Activated CD4-positive, alpha-beta T cell treated with anti-CD3 and anti-CD28 coated beads for 36 hours (primary cell): ENCODE measurements at regions of chr5 and their contacts with region 1.

Region 1: DNA sequence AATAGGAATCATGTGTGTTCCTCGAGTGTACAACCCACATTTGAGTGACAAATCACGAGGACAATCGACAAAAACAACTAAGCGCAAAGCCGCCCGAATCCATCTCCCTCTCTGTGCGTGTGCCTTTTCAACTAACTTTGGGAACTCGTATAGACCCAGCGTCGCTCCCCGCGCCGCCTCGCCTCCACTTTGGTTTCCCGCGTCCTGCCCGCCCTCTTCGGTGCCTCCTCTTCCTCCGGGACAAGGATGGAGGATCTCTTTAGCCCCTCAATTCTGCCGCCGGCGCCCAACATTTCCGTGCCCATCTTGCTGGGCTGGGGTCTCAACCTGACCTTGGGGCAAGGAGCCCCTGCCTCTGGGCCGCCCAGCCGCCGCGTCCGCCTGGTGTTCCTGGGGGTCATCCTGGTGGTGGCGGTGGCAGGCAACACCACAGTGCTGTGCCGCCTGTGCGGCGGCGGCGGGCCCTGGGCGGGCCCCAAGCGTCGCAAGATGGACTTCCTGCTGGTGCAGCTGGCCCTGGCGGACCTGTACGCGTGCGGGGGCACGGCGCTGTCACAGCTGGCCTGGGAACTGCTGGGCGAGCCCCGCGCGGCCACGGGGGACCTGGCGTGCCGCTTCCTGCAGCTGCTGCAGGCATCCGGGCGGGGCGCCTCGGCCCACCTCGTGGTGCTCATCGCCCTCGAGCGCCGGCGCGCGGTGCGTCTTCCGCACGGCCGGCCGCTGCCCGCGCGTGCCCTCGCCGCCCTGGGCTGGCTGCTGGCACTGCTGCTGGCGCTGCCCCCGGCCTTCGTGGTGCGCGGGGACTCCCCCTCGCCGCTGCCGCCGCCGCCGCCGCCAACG is at the start of gene GPR150:
- DNase-seq: peak; percentile 81
- ATAC-seq: peak; percentile 65
- H3K4me3 Mint-ChIP-seq: peak within 1 kb of the TSS; percentile 75
- H3K27ac Mint-ChIP-seq: peak within 1 kb of the TSS; percentile 73
- H3K4me1 Mint-ChIP-seq: peaks cover 47% of the 10 kb centered on the region
- H3K27me3 Mint-ChIP-seq: no peaks in the 10 kb centered on the region
- total RNA-seq, gene GPR150: 0.37 to 0.46 TPM

Region 2: GRCh38 chr5:95565280-95565920 is 54.9 kb before region 1 on chr5:
- CTCF ChIA-PET with region 1: no interaction called
- POLR2A ChIA-PET with region 1: no interaction called
- intact Hi-C with region 1: no loop called
- DNase-seq: no peak
- ATAC-seq: no peak
- H3K4me3 Mint-ChIP-seq: no peak overlapping the region
- H3K27ac Mint-ChIP-seq: no peak overlapping the region
- H3K4me1 Mint-ChIP-seq: peaks cover 5% of the 10 kb centered on the region
- H3K27me3 Mint-ChIP-seq: no peaks in the 10 kb centered on the region

Region 3: GRCh38 chr5:95591490-95591901 is 28.8 kb before region 1 on chr5:
- CTCF ChIA-PET with region 1: no interaction called
- POLR2A ChIA-PET with region 1: no interaction called
- intact Hi-C with region 1: loop called (anchors 1 kb)
- DNase-seq: no peak
- ATAC-seq: peak; percentile 95
- H3K4me3 Mint-ChIP-seq: no peak overlapping the region
- H3K27ac Mint-ChIP-seq: peak overlapping the region; percentile 62
- H3K4me1 Mint-ChIP-seq: peaks cover 30% of the 10 kb centered on the region
- H3K27me3 Mint-ChIP-seq: no peaks in the 10 kb centered on the region

Region 4: GRCh38 chr5:95631991-95632675 is 11.9 kb after region 1 on chr5:
- CTCF ChIA-PET with region 1: interaction called, 26 read pairs
- POLR2A ChIA-PET with region 1: interaction called, 13 read pairs
- intact Hi-C with region 1: loop called (anchors 1 kb)
- DNase-seq: peak; percentile 85
- ATAC-seq: peak; percentile 99
- H3K4me3 Mint-ChIP-seq: peak overlapping the region; percentile 22
- H3K27ac Mint-ChIP-seq: peak overlapping the region; percentile 94
- H3K4me1 Mint-ChIP-seq: peaks cover 22% of the 10 kb centered on the region
- H3K27me3 Mint-ChIP-seq: peaks cover 1% of the 10 kb centered on the region

Region 5: GRCh38 chr5:96807075-96807654 is 1186.9 kb after region 1 on chr5:
- CTCF ChIA-PET with region 1: no interaction called
- POLR2A ChIA-PET with region 1: no interaction called
- intact Hi-C with region 1: loop called in 1 of 2 experiments (anchors 10 kb)
- DNase-seq: peak; percentile 65
- ATAC-seq: peak; percentile 5
- H3K4me3 Mint-ChIP-seq: peak overlapping the region; percentile 89
- H3K27ac Mint-ChIP-seq: peak overlapping the region; percentile 94
- H3K4me1 Mint-ChIP-seq: peaks cover 55% of the 10 kb centered on the region
- H3K27me3 Mint-ChIP-seq: no peaks in the 10 kb centered on the region